ENCODE measurements at regions of chr3 and their contacts with region 1.

Region 1: GRCh38 chr3:46496741-46497554 is 828 bp upstream of the RTP3 start:
- DNase-seq: peak; percentile 72
- H3K4me3 ChIP-seq: no peak overlapping the region
- H3K27ac ChIP-seq: no peak overlapping the region
- H3K4me1 ChIP-seq: peaks cover 77% of the 10 kb centered on the region
- CTCF ChIP-seq: peak; percentile 85

Region 2: DNA sequence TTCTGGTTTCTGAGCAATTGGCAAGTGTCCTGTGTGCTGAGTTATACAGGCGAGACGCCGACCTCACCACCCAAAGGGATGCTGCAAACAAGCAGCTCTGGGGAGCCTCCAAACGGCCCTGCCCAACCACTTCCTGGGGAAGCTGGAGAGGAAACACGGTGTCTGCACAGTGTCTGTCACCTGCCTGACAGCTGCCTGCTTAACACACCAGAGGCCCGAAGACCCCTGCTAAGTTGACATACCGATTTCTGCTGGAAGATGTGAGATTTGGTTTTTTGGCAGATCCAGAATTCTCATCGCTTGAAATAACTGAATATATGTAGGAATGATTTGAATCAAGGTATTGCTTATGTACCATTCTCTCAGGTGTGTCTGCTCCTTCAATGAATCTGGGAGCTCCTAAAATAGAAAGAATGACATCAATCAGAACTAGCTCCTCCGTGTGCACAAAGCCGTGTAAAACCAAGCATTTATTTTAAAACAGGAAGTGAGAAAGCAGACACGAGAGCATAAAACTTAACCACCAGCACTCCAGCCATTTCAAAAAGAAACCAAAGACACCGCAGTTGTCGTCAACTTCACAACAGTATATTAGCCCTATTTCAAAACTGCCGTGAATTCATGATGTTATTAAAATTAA is 42.0 kb after region 1 on chr3:
- CTCF ChIA-PET with region 1: interaction called, 8 read pairs
- POLR2A ChIA-PET with region 1: interaction called, 70 read pairs
- intact Hi-C with region 1: loop called (anchors 2 kb)
- DNase-seq: peak; percentile 99
- H3K4me3 ChIP-seq: peak overlapping the region; percentile 56
- H3K27ac ChIP-seq: peak overlapping the region; percentile 99
- H3K4me1 ChIP-seq: peaks cover 79% of the 10 kb centered on the region
- CTCF ChIP-seq: no peak

Region 3: GRCh38 chr3:47250309-47251060 is 753.5 kb after region 1 on chr3:
- CTCF ChIA-PET with region 1: no interaction called
- POLR2A ChIA-PET with region 1: no interaction called
- intact Hi-C with region 1: no loop called
- DNase-seq: peak; percentile 54
- H3K4me3 ChIP-seq: no peak overlapping the region
- H3K27ac ChIP-seq: no peak overlapping the region
- H3K4me1 ChIP-seq: no peaks in the 10 kb centered on the region
- CTCF ChIP-seq: peak; percentile 80